Heart right ventricle (tissue), 16 donors: ENCODE measurements at regions of chr2 and their contacts with region 1.

Region 1: DNA sequence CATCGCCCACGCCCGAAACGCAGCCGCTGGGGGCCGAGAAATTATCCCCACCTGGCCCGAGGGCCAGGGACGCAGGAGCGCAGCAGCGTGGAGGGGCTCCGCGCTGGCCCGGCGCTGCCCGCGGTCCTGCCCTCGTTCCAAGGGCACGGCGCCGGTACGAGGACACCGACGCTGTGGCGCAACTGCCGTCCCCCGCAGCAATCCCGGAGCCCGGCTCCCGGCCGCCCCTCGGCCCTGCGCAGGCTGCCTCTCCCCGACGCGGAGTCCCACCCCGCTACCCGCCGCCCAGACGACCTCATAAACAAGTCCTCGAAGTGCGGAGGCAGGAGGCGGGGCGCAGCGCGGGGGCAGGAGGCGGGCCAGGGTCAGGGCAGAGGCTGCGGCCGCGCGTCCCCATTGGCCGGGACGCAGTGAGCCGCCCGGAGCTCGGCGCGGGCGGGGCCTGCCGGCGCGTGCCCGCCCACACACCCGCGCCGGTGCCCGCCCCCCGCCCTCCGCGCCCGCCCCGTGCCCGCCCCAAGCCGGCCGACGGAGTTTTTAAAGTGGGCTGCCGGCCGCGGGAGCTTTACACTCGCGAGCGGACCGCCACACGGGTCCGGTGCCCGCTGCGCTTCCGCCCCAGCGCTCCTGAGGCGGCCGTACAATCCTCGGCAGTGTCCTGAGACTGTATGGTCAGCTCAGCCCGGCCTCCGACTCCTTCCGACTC is at the start of gene EPAS1:
- DNase-seq: peak; percentile 98
- ATAC-seq: peak; percentile 76 to 91 (median 86)
- H3K4me3 ChIP-seq: peak within 1 kb of the TSS; percentile 75 to 96 (median 90)
- H3K27ac ChIP-seq: peak within 1 kb of the TSS; percentile 95 to 100 (median 98)
- H3K4me1 ChIP-seq: peaks cover 0 to 44% (median 18%) of the 10 kb centered on the region in 9 donors
- H3K27me3 ChIP-seq: peaks cover 0 to 24% (median 0%) of the 10 kb centered on the region in 7 donors
- CTCF ChIP-seq: peak in 1 of 9 donors; percentile 7
- total RNA-seq, gene EPAS1: 176 to 415 (median 210) TPM

Region 2: GRCh38 chr2:46010925-46011490 is 286.0 kb before region 1 on chr2:
- intact Hi-C with region 1: loop called in 4 of 10 experiments (anchors 2 to 5 kb)
- DNase-seq: no peak
- ATAC-seq: peak in 5 of 8 donors; percentile 45 to 77 (median 60)
- H3K4me3 ChIP-seq: no peak overlapping the region
- H3K27ac ChIP-seq: peak overlapping the region in 2 of 10 donors; percentile 19 to 22
- H3K4me1 ChIP-seq: peaks cover 0 to 43% (median 19%) of the 10 kb centered on the region in 9 donors
- H3K27me3 ChIP-seq: no peaks in the 10 kb centered on the region
- CTCF ChIP-seq: peak; percentile 21 to 81 (median 72)

Region 3: GRCh38 chr2:46097714-46098480 is 199.1 kb before region 1 on chr2:
- intact Hi-C with region 1: loop called in 2 of 10 experiments (anchors 10 kb)
- DNase-seq: peak in 1 of 2 donors; percentile 89
- ATAC-seq: peak; percentile 82 to 97 (median 93)
- H3K4me3 ChIP-seq: no peak overlapping the region
- H3K27ac ChIP-seq: peak overlapping the region; percentile 11 to 92 (median 80)
- H3K4me1 ChIP-seq: peaks cover 0 to 39% (median 22%) of the 10 kb centered on the region in 9 donors
- H3K27me3 ChIP-seq: no peaks in the 10 kb centered on the region
- CTCF ChIP-seq: no peak

Region 4: GRCh38 chr2:46241344-46241743 is 55.6 kb before region 1 on chr2:
- intact Hi-C with region 1: no loop called
- DNase-seq: no peak
- ATAC-seq: peak in 1 of 8 donors; percentile 45
- H3K4me3 ChIP-seq: no peak overlapping the region
- H3K27ac ChIP-seq: no peak overlapping the region
- H3K4me1 ChIP-seq: peaks cover 0 to 16% (median 0%) of the 10 kb centered on the region in 9 donors
- H3K27me3 ChIP-seq: no peaks in the 10 kb centered on the region
- CTCF ChIP-seq: no peak

Region 5: GRCh38 chr2:46335391-46336282 is 38.6 kb after region 1 on chr2:
- intact Hi-C with region 1: loop called in 5 of 10 experiments (anchors 5 kb)
- DNase-seq: peak in 1 of 2 donors; percentile 62
- ATAC-seq: peak in 7 of 8 donors; percentile 16 to 55 (median 39)
- H3K4me3 ChIP-seq: peak overlapping the region in 8 of 10 donors; percentile 8 to 49 (median 42)
- H3K27ac ChIP-seq: peak overlapping the region; percentile 41 to 91 (median 85)
- H3K4me1 ChIP-seq: peaks cover 65 to 100% (median 98%) of the 10 kb centered on the region in 9 donors
- H3K27me3 ChIP-seq: no peaks in the 10 kb centered on the region
- CTCF ChIP-seq: no peak

Region 6: GRCh38 chr2:46364797-46365457 is 67.9 kb after region 1 on chr2:
- intact Hi-C with region 1: loop called in 3 of 10 experiments (anchors 2 to 5 kb)
- DNase-seq: peak in 1 of 2 donors; percentile 65
- ATAC-seq: peak in 7 of 8 donors; percentile 13 to 61 (median 53)
- H3K4me3 ChIP-seq: no peak overlapping the region
- H3K27ac ChIP-seq: peak overlapping the region in 7 of 10 donors; percentile 8 to 71 (median 37)
- H3K4me1 ChIP-seq: peaks cover 0 to 93% (median 41%) of the 10 kb centered on the region in 9 donors
- H3K27me3 ChIP-seq: no peaks in the 10 kb centered on the region
- CTCF ChIP-seq: peak; percentile 74 to 88 (median 83)

Region 7: GRCh38 chr2:46461011-46461674 is 164.2 kb after region 1 on chr2:
- intact Hi-C with region 1: loop called in 2 of 10 experiments (anchors 5 to 10 kb)
- DNase-seq: peak; percentile 81 to 83
- ATAC-seq: peak; percentile 47 to 85 (median 68)
- H3K4me3 ChIP-seq: no peak overlapping the region
- H3K27ac ChIP-seq: peak overlapping the region in 9 of 10 donors; percentile 34 to 79 (median 66)
- H3K4me1 ChIP-seq: peaks cover 11 to 48% (median 32%) of the 10 kb centered on the region in 9 donors
- H3K27me3 ChIP-seq: no peaks in the 10 kb centered on the region
- CTCF ChIP-seq: peak; percentile 98 to 100 (median 99)

Region 8: GRCh38 chr2:46525522-46526155 is 228.6 kb after region 1 on chr2:
- intact Hi-C with region 1: no loop called
- DNase-seq: no peak
- ATAC-seq: no peak
- H3K4me3 ChIP-seq: no peak overlapping the region
- H3K27ac ChIP-seq: no peak overlapping the region
- H3K4me1 ChIP-seq: peaks cover 1 to 21% (median 11%) of the 10 kb centered on the region in 9 donors
- H3K27me3 ChIP-seq: no peaks in the 10 kb centered on the region
- CTCF ChIP-seq: no peak